ENCODE measurements at regions of chr17 and their contacts with region 1.

Region 1: DNA sequence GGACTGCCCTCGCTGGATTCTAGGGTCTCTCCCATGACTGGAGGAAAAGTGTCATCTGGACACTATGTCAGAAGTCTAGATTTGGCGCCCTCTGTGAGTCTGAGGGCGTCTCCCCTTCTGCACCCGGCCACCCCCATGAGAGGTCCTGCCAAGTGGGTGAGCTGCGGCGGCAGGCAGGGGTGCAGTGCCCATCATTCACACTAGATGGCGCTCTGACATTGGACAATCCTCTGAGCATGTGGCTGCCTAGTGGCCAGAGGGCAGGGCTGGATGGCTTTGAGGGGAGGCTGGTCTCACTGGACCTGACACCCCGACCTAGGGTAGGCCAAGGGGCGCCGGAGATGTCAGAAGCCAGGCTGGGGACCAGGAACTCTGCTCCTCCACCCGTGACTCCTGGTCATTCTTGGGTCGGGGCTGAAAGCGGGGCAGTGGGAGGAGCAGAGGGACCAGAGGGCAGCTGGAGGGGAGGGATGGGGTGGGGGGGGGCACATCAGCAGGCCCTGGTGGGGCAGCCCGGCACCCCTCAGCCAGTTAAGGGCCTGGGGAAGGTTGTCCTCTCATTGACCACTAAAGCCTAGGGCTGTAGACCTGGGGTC is 28.0 kb downstream of the MRM1 start:
- DNase-seq: peak; percentile 64 to 99
- H3K4me3 ChIP-seq: no peak overlapping the region
- H3K27ac ChIP-seq: no peak overlapping the region
- H3K4me1 ChIP-seq: peaks cover 2 to 28% (median 11%) of the 10 kb centered on the region in 4 experiments; a peak in 6 of 7 replicates
- H3K27me3 ChIP-seq: no peaks in the 10 kb centered on the region; a peak in 1 of 7 replicates
- CTCF ChIP-seq: peak; percentile 98 to 99 (median 99)
- EP300 ChIP-seq: no peak
- POLR2A ChIP-seq: no peak
- RAD21 ChIP-seq: peak; percentile 100

Region 2: DNA sequence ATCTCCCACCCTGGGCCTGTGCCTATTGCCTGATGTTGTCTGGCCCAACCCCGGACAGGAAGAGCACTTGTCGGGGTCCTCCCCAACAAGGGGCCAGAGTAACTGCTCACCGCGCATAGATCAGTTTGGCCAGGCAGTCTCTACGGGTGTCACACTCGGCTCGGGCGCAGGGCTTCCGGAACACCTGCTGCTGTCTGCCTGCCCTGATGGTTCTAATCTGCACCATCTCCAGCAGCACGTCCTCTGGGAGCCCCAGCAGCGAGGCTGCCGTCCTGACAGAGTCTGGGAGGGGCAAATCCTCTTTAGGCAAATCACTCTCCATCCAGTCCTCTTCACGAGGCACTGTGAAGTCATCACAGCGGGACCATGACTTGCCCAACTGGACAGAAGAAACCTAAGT is 118.7 kb before region 1 on chr17:
- CTCF ChIA-PET with region 1: no interaction called
- POLR2A ChIA-PET with region 1: no interaction called
- DNase-seq: no peak
- H3K4me3 ChIP-seq: no peak overlapping the region
- H3K27ac ChIP-seq: no peak overlapping the region
- H3K4me1 ChIP-seq: no peaks in the 10 kb centered on the region
- H3K27me3 ChIP-seq: no peaks in the 10 kb centered on the region
- CTCF ChIP-seq: no peak
- EP300 ChIP-seq: no peak
- POLR2A ChIP-seq: no peak
- RAD21 ChIP-seq: no peak

Region 3: GRCh38 chr17:36611345-36612072 is 17.8 kb before region 1 on chr17:
- CTCF ChIA-PET with region 1: interaction called, 122 read pairs
- POLR2A ChIA-PET with region 1: interaction called, 5 read pairs
- DNase-seq: no peak
- H3K4me3 ChIP-seq: no peak overlapping the region
- H3K27ac ChIP-seq: no peak overlapping the region
- H3K4me1 ChIP-seq: peaks cover 9 to 20% (median 16%) of the 10 kb centered on the region in 4 experiments
- H3K27me3 ChIP-seq: no peaks in the 10 kb centered on the region
- CTCF ChIP-seq: no peak
- EP300 ChIP-seq: no peak
- POLR2A ChIP-seq: no peak
- RAD21 ChIP-seq: no peak

Region 4: DNA sequence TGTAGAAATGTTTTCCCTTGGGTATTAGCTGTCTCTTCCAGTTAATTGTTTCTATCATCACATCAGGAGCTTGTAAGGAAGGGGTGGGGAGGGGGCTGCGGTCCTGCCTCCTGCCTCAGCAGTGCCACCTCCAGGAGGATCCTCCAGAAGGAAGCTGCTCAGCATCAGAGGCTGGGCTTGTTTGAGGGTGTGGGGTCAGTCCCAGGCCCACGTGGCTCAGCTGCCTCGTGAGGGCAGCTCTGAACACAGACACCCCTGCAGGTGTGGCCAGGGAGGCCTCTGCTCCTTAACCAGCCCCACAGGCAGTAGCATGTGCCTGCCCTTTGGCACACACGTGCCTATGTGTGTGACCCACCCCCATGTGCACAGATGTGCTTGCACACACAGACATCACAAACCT is 18.3 kb after region 1 on chr17:
- CTCF ChIA-PET with region 1: interaction called, 86 read pairs
- POLR2A ChIA-PET with region 1: interaction called, 3 read pairs
- DNase-seq: peak in 1 of 2 experiments; percentile 61
- H3K4me3 ChIP-seq: no peak overlapping the region
- H3K27ac ChIP-seq: no peak overlapping the region
- H3K4me1 ChIP-seq: peaks cover 2 to 9% (median 5%) of the 10 kb centered on the region in 4 experiments; a peak in 6 of 7 replicates
- H3K27me3 ChIP-seq: peaks cover 7 to 21% (median 17%) of the 10 kb centered on the region in 4 experiments
- CTCF ChIP-seq: peak; percentile 56 to 75 (median 72)
- EP300 ChIP-seq: no peak
- POLR2A ChIP-seq: no peak
- RAD21 ChIP-seq: peak; percentile 40 to 56; a peak in 3 of 4 replicates

Region 5: DNA sequence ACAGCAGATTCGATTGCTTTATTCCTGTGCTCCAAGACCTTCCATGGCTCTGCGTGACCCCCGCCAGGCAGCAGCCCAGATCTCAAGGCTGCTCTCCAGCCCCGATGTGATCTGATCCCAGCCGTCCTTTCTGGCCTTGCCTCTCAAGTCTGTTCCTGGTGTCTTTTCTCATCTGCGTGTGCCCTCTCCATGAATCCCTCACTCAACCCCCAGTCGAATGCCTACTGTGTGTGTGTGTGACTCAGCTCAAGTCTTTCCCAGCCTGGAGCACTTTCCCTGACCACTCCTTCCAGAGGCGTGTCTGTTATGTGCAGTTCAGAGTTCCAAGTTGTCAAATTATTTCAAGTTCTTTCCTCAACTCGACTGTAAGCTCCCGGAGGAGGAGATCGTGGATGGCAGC is 36.1 kb after region 1 on chr17:
- CTCF ChIA-PET with region 1: interaction called, 86 read pairs
- POLR2A ChIA-PET with region 1: no interaction called
- DNase-seq: no peak
- H3K4me3 ChIP-seq: no peak overlapping the region
- H3K27ac ChIP-seq: no peak overlapping the region
- H3K4me1 ChIP-seq: no peaks in the 10 kb centered on the region; a peak in 2 of 7 replicates
- H3K27me3 ChIP-seq: no peaks in the 10 kb centered on the region
- CTCF ChIP-seq: no peak
- EP300 ChIP-seq: no peak
- POLR2A ChIP-seq: no peak
- RAD21 ChIP-seq: no peak

Region 6: DNA sequence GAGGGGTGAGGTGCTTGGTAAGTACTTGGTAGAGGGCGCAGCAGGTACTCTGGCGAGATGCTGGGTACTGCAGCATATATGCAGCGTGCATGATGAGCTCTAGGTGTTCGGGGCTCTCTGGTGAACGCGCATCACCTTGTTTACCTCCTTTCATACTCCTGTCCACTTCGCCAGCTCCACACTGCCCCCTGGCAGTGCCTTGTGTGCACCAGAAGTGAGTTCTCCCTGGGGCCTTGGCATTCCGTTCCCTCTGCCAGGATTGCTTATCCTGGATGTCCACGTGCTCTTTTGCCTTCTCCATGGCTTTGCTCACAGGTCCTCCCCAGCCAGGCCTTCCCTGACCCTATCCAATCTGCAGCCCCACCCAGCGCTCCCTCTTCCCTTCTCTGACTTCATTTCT is 126.2 kb after region 1 on chr17:
- CTCF ChIA-PET with region 1: interaction called, 38 read pairs
- POLR2A ChIA-PET with region 1: interaction called, 3 read pairs
- DNase-seq: peak; percentile 41 to 83
- H3K4me3 ChIP-seq: no peak overlapping the region
- H3K27ac ChIP-seq: no peak overlapping the region
- H3K4me1 ChIP-seq: peaks cover 0 to 5% (median 0%) of the 10 kb centered on the region in 4 experiments; a peak in 2 of 7 replicates
- H3K27me3 ChIP-seq: no peaks in the 10 kb centered on the region
- CTCF ChIP-seq: peak; percentile 84 to 91 (median 88)
- EP300 ChIP-seq: no peak
- POLR2A ChIP-seq: no peak
- RAD21 ChIP-seq: peak; percentile 84 to 87

Region 7: DNA sequence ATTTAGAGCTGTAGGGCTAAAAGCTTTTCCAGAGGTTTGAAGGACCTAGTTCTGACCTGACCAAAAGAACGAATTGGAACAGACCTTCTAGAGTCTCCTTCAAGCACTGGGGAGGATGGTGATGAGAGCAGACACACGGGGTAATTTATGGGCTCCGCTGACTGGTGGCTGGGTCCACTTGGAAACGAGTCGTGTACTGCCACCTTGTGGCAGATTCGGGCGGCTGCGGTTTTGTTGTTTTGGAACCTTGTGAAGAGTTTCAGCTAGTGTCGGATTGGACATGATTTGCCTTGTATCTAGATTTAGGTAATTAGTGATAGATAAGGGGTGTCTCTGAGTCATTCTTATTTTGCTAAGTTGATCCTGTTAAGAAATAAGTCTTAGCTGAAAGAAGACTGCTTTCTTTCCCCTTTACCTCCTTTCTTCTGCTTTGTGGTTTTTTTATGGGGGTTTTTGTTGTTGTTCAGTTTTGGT is 418.3 kb after region 1 on chr17:
- CTCF ChIA-PET with region 1: interaction called, 45 read pairs
- POLR2A ChIA-PET with region 1: no interaction called
- DNase-seq: peak; percentile 72 to 90
- H3K4me3 ChIP-seq: no peak overlapping the region
- H3K27ac ChIP-seq: no peak overlapping the region
- H3K4me1 ChIP-seq: peaks cover 6 to 24% (median 12%) of the 10 kb centered on the region in 4 experiments
- H3K27me3 ChIP-seq: no peaks in the 10 kb centered on the region
- CTCF ChIP-seq: peak; percentile 81 to 94 (median 88)
- EP300 ChIP-seq: no peak
- POLR2A ChIP-seq: no peak
- RAD21 ChIP-seq: peak; percentile 94 to 96

Measured in H1 (cell line).